Ovary (tissue), 10 donors: ENCODE measurements at regions of chr17 and their contacts with region 1.

Region 1: DNA sequence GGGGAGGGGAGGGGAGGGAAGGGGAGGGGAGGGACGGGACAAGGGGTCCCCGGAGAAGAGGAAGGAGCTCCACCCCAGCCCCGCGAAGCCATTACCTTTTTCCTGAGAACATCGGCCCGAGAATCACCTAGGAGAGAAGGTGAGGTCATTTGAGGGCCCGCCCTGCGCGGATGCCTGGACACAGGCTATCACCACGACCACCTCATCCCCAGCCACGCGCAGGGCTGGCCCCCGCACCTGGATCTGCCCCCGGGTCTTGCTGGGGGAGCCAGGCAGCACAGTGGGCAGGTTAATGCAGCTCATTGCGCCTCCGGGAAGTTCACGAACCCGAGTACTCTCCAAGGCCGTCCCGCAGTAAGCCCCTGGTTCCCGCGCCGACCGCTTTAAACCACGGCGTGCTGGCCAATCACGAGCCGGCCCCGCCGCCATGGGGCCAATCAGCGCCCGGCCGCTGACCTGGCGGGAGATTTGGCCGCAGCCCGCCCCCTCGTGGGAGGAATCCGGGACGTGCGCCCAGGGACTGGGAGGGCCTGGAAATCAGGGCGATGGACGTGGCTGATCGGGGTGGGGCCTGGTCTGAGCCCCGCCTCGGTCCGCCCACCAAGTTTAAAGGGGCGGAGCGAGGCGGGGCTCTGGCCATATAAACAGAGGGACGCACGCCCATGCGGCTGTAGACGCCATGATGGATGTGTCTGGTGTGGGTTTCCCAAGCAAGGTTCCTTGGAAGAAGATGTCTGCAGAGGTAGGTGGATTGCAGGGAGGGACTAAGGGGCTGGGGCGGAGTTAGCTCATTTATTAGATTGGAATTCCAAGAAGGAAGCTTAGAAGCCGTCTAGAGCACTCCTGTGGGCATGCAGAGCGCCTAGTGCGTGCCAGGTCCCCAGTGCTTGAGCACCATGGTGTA is at the starts of genes AFMID and TK1:
- DNase-seq: peak; percentile 97 to 100 (median 98)
- H3K4me3 ChIP-seq: peak within 1 kb of the TSS; percentile 38
- H3K27ac ChIP-seq: peak within 1 kb of the TSS; percentile 11 to 40
- H3K4me1 ChIP-seq: peaks cover 7% of the 10 kb centered on the region
- H3K27me3 ChIP-seq: no peaks in the 10 kb centered on the region
- CTCF ChIP-seq: peak; percentile 94 to 96 (median 96)
- EP300 ChIP-seq: no peak
- POLR2A ChIP-seq: peak; percentile 38
- total RNA-seq, gene AFMID: 32.4 to 69.5 (median 38.5) TPM
- total RNA-seq, gene TK1: 0.35 to 4.9 (median 1.4) TPM

Region 2: GRCh38 chr17:77957857-77958715 is 228.9 kb before region 1 on chr17 and contains the start of gene TNRC6C:
- intact Hi-C with region 1: loop called in 1 of 4 experiments (anchors 5 kb)
- DNase-seq: peak; percentile 100
- H3K4me3 ChIP-seq: peak within 1 kb of the TSS; percentile 68
- H3K27ac ChIP-seq: peak within 1 kb of the TSS; percentile 79
- H3K4me1 ChIP-seq: peaks cover 9% of the 10 kb centered on the region
- H3K27me3 ChIP-seq: no peaks in the 10 kb centered on the region
- CTCF ChIP-seq: peak in 2 of 3 donors; percentile 30 to 49
- EP300 ChIP-seq: peak; percentile 74
- POLR2A ChIP-seq: peak; percentile 100
- total RNA-seq, gene TNRC6C: 9.2 to 45.3 (median 32.5) TPM

Region 3: DNA sequence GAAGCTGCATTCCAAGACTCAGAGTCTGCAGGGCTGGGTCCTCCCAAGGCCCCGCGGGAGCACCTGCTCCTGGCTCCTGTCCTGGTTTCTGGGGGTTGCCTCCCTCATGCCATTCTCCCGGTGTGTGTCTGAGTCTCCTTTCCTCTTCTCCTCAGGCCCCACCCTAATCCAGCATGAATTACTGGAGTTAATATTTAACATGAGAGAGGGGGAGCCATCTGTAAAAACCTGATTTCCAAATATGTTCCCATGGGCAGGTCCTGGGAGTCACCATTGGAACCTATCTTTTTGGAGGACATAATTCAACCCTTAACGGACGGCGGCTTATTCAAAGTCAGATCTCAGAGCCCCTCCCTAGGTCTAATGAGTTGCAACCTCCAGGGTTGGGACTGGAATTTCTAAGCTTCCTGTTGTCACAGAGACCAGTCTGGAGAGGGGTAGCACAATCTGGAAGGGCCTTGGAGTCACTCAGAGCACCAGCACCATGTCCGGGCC is 35.4 kb before region 1 on chr17:
- intact Hi-C with region 1: loop called in 1 of 4 experiments (anchors 1 kb)
- DNase-seq: no peak
- H3K4me3 ChIP-seq: no peak overlapping the region
- H3K27ac ChIP-seq: no peak overlapping the region
- H3K4me1 ChIP-seq: no peaks in the 10 kb centered on the region
- H3K27me3 ChIP-seq: no peaks in the 10 kb centered on the region
- CTCF ChIP-seq: no peak
- EP300 ChIP-seq: no peak
- POLR2A ChIP-seq: no peak